Dendritic cell treated with granulocyte-macrophage colony-stimulating factor and Interleukin-4, amounts not matched to agents 40 ng/mL and 50 ng/mL, for 4 days (primary cell): ENCODE measurements at regions of chrX and their contacts with region 1.

Region 1: DNA sequence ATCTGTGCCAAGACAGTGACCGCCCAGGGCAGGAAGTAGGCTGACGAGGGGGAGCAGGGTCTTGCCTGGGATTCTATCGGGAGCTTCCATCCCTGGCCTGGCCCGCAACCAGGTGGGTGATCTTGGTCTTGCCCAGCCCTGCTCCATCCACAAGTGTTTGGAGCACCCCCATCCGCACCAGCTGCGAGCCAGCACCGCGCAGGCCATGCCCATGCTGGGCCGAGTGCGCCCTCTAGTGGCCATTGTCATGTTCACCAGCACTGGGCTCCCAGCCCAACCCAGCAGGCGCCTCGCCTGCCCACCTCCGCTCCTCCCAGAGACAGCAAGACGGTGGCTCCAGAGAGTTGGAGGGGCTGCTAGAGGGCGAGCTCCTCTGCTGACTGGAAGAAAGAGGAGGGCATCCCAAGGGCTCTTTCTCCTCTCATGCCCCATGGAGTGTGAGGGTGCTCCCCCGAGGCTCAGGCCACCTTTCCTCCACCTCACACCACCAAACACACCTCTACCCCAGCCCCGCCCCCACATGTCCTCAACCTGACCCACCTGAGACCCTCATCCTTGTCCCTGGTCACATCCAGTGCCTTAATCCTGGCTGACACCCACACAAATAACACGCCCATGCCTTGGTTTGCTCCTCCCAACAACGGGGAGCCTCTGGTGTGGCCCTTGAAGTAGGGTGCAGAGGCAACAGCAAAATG is 9.8 kb upstream of the ATP2B3 start:
- H3K4me3 Mint-ChIP-seq: no peak overlapping the region
- H3K27ac Mint-ChIP-seq: no peak overlapping the region
- H3K4me1 Mint-ChIP-seq: peaks cover 6% of the 10 kb centered on the region
- H3K27me3 Mint-ChIP-seq: peaks cover 2% of the 10 kb centered on the region

Region 2: GRCh38 chrX:153032397-153033118 is 475.1 kb before region 1 on chrX:
- intact Hi-C with region 1: loop called (anchors 10 kb)
- H3K4me3 Mint-ChIP-seq: peak overlapping the region; percentile 76
- H3K27ac Mint-ChIP-seq: peak overlapping the region; percentile 91
- H3K4me1 Mint-ChIP-seq: no peaks in the 10 kb centered on the region
- H3K27me3 Mint-ChIP-seq: peaks cover 7% of the 10 kb centered on the region

Region 3: GRCh38 chrX:153470435-153471363 is 36.9 kb before region 1 on chrX and contains the start of gene HAUS7:
- intact Hi-C with region 1: loop called (anchors 2 kb)
- H3K4me3 Mint-ChIP-seq: peak within 1 kb of the TSS; percentile 78
- H3K27ac Mint-ChIP-seq: peak within 1 kb of the TSS; percentile 75
- H3K4me1 Mint-ChIP-seq: peaks cover 16% of the 10 kb centered on the region
- H3K27me3 Mint-ChIP-seq: peaks cover 14% of the 10 kb centered on the region